B cell (primary cell): ENCODE measurements at regions of chr9 and their contacts with region 1.

Region 1: GRCh38 chr9:129460323-129461261 is 160.3 kb downstream of the C9orf50 start:
- DNase-seq: peak; percentile 84
- ATAC-seq: peak; percentile 73
- H3K4me3 ChIP-seq: peak overlapping the region in 4 of 5 experiments; percentile 43 to 61 (median 49)
- H3K4me3 Mint-ChIP-seq: peak overlapping the region; percentile 86
- H3K27ac ChIP-seq: peak overlapping the region; percentile 34 to 66
- H3K27ac Mint-ChIP-seq: peak overlapping the region; percentile 90
- H3K4me1 ChIP-seq: peaks cover 33 to 35% of the 10 kb centered on the region in 2 donors
- H3K4me1 Mint-ChIP-seq: peaks cover 27% of the 10 kb centered on the region
- H3K27me3 ChIP-seq: peaks cover 0 to 10% (median 3%) of the 10 kb centered on the region in 4 experiments
- H3K27me3 Mint-ChIP-seq: no peaks in the 10 kb centered on the region
- CTCF ChIP-seq: no peak

Region 2: GRCh38 chr9:129225815-129226214 is 234.8 kb before region 1 on chr9:
- CTCF ChIA-PET with region 1: no interaction called
- POLR2A ChIA-PET with region 1: no interaction called
- intact Hi-C with region 1: no loop called
- DNase-seq: no peak
- ATAC-seq: no peak
- H3K4me3 ChIP-seq: no peak overlapping the region
- H3K4me3 Mint-ChIP-seq: no peak overlapping the region
- H3K27ac ChIP-seq: no peak overlapping the region
- H3K27ac Mint-ChIP-seq: no peak overlapping the region
- H3K4me1 ChIP-seq: peaks cover 0 to 8% of the 10 kb centered on the region in 2 donors
- H3K4me1 Mint-ChIP-seq: peaks cover 7% of the 10 kb centered on the region
- H3K27me3 ChIP-seq: peaks cover 0 to 33% (median 0%) of the 10 kb centered on the region in 4 experiments
- H3K27me3 Mint-ChIP-seq: peaks cover 47% of the 10 kb centered on the region
- CTCF ChIP-seq: no peak

Region 3: DNA sequence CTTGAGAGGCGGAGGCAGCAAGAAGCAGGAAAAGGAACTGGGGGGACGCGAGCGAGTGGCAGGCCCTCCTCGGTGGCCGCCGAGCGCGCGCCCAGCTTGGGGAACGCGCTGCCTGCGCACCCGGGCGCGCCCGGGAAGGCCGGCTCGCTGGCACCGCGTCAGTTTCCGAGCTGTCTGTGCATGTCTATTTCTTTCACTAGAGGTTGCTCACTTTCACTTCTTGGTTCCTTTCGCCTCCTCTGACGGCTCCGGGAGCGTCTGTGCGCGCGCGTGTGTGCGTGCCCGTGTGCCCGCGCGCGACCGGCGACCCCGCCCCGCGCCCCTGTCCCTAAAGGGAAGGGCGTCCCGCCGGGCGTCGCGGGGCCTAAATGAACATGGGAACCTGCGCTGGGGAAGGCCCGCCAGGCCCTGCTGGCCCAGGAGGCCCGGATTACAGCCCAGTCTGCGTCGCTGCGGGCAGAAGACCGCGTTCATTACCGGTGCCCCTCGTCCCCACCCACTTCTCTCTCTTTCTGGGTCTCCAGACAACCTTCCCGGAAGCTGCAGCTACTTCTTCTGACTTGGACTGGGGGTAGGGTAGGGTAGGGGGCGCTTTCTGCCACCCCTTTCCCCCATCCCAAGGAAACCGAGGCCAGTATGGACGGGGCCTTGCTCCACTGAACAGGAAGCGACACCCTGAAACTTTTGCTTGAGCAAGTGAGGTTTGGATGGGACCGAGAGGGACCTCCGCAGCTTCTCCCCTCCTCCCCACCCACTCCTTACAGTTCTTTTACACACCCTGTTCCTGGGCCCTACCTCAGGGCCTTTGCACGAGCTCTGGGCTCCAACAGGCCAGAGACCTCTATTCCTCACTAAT is 76.8 kb before region 1 on chr9:
- CTCF ChIA-PET with region 1: interaction called, 8 read pairs
- POLR2A ChIA-PET with region 1: interaction called, 5 read pairs
- intact Hi-C with region 1: loop called (anchors 1 kb)
- DNase-seq: peak; percentile 94
- ATAC-seq: peak; percentile 88
- H3K4me3 ChIP-seq: peak overlapping the region; percentile 12 to 82 (median 68)
- H3K4me3 Mint-ChIP-seq: peak overlapping the region; percentile 86
- H3K27ac ChIP-seq: peak overlapping the region; percentile 90 to 96
- H3K27ac Mint-ChIP-seq: peak overlapping the region; percentile 97
- H3K4me1 ChIP-seq: peaks cover 17 to 26% of the 10 kb centered on the region in 2 donors
- H3K4me1 Mint-ChIP-seq: peaks cover 21% of the 10 kb centered on the region
- H3K27me3 ChIP-seq: peaks cover 0 to 7% (median 0%) of the 10 kb centered on the region in 4 experiments
- H3K27me3 Mint-ChIP-seq: peaks cover 3% of the 10 kb centered on the region
- CTCF ChIP-seq: no peak

Region 4: GRCh38 chr9:129413537-129414376 is 46.8 kb before region 1 on chr9:
- CTCF ChIA-PET with region 1: interaction called, 3 read pairs
- POLR2A ChIA-PET with region 1: interaction called, 18 read pairs
- intact Hi-C with region 1: loop called (anchors 1 kb)
- DNase-seq: peak; percentile 99
- ATAC-seq: peak; percentile 71
- H3K4me3 ChIP-seq: peak overlapping the region in 4 of 5 experiments; percentile 75 to 79 (median 77)
- H3K4me3 Mint-ChIP-seq: peak overlapping the region; percentile 91
- H3K27ac ChIP-seq: peak overlapping the region; percentile 99
- H3K27ac Mint-ChIP-seq: peak overlapping the region; percentile 100
- H3K4me1 ChIP-seq: peaks cover 18 to 25% of the 10 kb centered on the region in 2 donors
- H3K4me1 Mint-ChIP-seq: peaks cover 25% of the 10 kb centered on the region
- H3K27me3 ChIP-seq: no peaks in the 10 kb centered on the region
- H3K27me3 Mint-ChIP-seq: no peaks in the 10 kb centered on the region
- CTCF ChIP-seq: no peak

Region 5: GRCh38 chr9:129436751-129437625 is 23.6 kb before region 1 on chr9:
- CTCF ChIA-PET with region 1: no interaction called
- POLR2A ChIA-PET with region 1: no interaction called
- intact Hi-C with region 1: no loop called
- DNase-seq: peak; percentile 59
- ATAC-seq: peak; percentile 42
- H3K4me3 ChIP-seq: peak overlapping the region; percentile 17 to 46 (median 42)
- H3K4me3 Mint-ChIP-seq: peak overlapping the region; percentile 95
- H3K27ac ChIP-seq: no peak overlapping the region
- H3K27ac Mint-ChIP-seq: peak overlapping the region; percentile 83
- H3K4me1 ChIP-seq: peaks cover 22 to 29% of the 10 kb centered on the region in 2 donors
- H3K4me1 Mint-ChIP-seq: peaks cover 21% of the 10 kb centered on the region
- H3K27me3 ChIP-seq: peaks cover 0 to 68% (median 32%) of the 10 kb centered on the region in 4 experiments
- H3K27me3 Mint-ChIP-seq: peaks cover 59% of the 10 kb centered on the region
- CTCF ChIP-seq: no peak

Region 6: DNA sequence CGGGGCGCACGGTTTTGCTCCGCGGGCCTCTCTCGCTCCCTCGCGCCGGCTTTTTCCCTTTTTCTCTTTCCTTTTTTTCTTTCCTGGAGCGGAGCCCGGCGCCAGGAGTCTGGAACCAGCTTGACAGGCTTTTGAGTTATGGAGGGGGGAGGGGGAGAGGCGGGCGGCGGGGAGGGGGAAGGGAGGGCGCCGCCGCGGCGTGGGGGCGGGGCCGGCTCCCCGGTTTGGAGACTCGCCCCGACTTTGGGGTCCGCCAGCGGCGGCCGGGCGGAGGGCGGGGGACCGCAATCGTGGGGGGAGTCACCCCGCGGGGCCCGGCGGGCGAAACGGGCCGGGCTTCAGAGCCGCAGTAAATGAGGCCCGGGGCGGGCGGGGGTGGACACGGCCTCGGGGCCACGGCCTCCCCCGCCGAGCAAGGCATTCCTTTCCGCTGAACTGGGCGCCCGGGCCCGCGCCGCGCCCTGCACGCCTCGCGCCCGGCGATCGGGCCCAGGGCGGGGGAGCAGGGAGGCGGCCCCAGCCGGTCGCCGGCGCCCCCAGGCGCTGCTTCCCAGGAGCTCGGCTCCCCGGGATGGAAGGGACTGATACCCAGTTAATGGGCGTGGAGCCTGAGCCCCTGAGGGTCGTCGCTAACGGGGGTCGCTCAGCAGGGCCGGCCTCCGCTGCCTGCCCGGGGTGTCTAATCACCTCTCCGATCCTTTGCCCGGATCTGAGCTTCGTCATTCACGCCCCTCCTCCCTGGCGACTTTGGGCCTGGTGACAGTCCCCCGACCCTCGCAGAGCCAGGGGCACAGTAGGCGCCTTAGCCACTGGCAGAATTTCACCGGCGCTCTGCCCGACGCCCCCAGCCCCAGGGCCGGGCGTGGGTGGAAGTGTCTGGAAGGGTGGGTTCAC is 22.2 kb after region 1 on chr9:
- CTCF ChIA-PET with region 1: interaction called, 3 read pairs
- POLR2A ChIA-PET with region 1: interaction called, 23 read pairs
- intact Hi-C with region 1: no loop called
- DNase-seq: peak; percentile 54
- ATAC-seq: peak; percentile 26
- H3K4me3 ChIP-seq: peak overlapping the region in 3 of 5 experiments; percentile 30 to 37 (median 34)
- H3K4me3 Mint-ChIP-seq: peak overlapping the region; percentile 75
- H3K27ac ChIP-seq: no peak overlapping the region
- H3K27ac Mint-ChIP-seq: no peak overlapping the region
- H3K4me1 ChIP-seq: peaks cover 25 to 26% of the 10 kb centered on the region in 2 donors
- H3K4me1 Mint-ChIP-seq: peaks cover 25% of the 10 kb centered on the region
- H3K27me3 ChIP-seq: peaks cover 0 to 42% (median 16%) of the 10 kb centered on the region in 4 experiments
- H3K27me3 Mint-ChIP-seq: peaks cover 38% of the 10 kb centered on the region
- CTCF ChIP-seq: no peak

Region 7: DNA sequence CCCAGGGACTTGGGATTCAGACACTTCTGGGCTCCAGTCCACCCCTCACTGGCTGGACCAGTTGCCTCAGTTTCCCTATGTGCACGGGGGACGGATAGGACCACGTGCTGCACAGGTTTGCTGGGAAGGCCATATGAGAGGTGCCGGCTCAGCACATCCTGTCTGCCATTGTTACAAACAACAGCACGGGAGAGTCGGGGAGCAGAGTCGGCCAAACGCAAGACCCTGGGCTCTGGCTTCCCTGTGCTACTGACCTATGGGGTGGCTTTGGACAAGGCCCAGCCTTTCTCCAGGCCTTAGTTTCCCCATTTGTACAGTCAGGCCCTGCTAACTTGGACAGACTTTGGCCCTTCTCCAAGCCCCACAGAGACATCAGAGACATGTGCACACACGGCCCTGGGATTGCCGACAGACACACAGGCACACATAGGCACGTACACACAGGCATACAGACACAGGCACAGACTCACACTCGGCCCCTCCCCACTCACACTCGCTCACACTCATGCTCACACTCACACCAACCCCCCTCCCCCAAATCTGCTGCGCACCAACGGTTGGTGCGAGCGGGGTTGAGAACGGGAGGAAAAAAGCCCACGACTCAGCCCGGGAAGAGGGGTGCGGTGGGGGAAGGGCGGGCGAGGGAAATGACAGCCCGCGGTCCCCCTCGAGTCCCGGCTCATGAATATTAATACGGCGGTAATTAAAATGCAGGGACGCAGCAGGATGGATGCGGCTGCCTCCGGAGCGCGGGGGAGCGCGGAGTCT is 27.2 kb after region 1 on chr9:
- CTCF ChIA-PET with region 1: interaction called, 3 read pairs
- POLR2A ChIA-PET with region 1: interaction called, 23 read pairs
- intact Hi-C with region 1: loop called (anchors 1 kb)
- DNase-seq: peak; percentile 69
- ATAC-seq: peak; percentile 13
- H3K4me3 ChIP-seq: peak overlapping the region; percentile 38 to 62 (median 49)
- H3K4me3 Mint-ChIP-seq: peak overlapping the region; percentile 89
- H3K27ac ChIP-seq: peak overlapping the region in 1 of 2 donors; percentile 63
- H3K27ac Mint-ChIP-seq: peak overlapping the region; percentile 90
- H3K4me1 ChIP-seq: peaks cover 24 to 28% of the 10 kb centered on the region in 2 donors
- H3K4me1 Mint-ChIP-seq: peaks cover 35% of the 10 kb centered on the region
- H3K27me3 ChIP-seq: peaks cover 0 to 38% (median 9%) of the 10 kb centered on the region in 4 experiments
- H3K27me3 Mint-ChIP-seq: peaks cover 15% of the 10 kb centered on the region
- CTCF ChIP-seq: no peak

Region 8: DNA sequence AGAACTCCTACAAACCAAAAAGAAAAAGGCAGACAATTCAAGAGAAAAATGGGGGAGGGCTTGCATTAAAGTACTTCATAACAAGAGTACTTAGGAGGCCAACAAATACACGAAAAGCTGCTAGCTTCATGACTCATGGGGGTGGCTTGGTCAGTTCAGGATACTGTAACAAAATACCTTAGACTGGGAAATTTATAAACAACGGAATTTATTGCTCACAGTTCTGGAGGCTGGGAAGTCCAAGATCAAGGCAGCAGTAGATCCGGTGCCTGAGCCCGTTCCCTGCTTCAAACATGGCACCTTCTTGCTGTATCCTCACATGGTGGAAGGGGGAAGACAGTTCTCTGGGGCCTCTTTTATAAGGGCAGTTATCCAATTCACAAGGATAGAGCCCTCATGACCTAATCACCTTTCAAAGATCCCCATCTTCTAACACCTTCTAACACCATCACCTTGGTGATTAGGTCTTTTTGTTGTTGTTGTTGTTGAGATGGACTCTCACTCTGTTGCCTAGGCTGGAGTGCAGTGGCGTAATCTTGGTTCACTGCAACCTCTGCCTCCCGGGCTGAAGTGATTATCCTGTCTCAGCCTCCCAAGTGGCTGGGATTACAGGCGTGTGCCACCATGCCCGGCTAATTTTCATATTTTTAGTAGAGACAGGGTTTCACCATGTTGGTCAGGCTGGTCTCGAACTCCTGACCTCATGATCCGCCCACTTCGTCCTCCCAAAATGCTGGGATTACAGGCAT is 49.1 kb after region 1 on chr9:
- CTCF ChIA-PET with region 1: no interaction called
- POLR2A ChIA-PET with region 1: no interaction called
- intact Hi-C with region 1: no loop called
- DNase-seq: no peak
- ATAC-seq: no peak
- H3K4me3 ChIP-seq: no peak overlapping the region
- H3K4me3 Mint-ChIP-seq: no peak overlapping the region
- H3K27ac ChIP-seq: no peak overlapping the region
- H3K27ac Mint-ChIP-seq: no peak overlapping the region
- H3K4me1 ChIP-seq: no peaks in the 10 kb centered on the region
- H3K4me1 Mint-ChIP-seq: peaks cover under 1% of the 10 kb centered on the region
- H3K27me3 ChIP-seq: peaks cover 0 to 6% (median 0%) of the 10 kb centered on the region in 4 experiments
- H3K27me3 Mint-ChIP-seq: peaks cover 8% of the 10 kb centered on the region
- CTCF ChIP-seq: no peak